Activated T-helper 1 cell treated with anti-CD3 and anti-CD28 coated beads, Interleukin-12 subunit alpha, Interleukin-12 subunit beta, Interleukin-2, Interleukin-4 antibody, amounts not matched to agents 30 ng/mL and 10 ng/mL and 1 ng/mL, durations not matched to agents 14 hours and 24 hours and 36 hours (primary cell): ENCODE measurements at regions of chr4 and their contacts with region 1.

Region 1: DNA sequence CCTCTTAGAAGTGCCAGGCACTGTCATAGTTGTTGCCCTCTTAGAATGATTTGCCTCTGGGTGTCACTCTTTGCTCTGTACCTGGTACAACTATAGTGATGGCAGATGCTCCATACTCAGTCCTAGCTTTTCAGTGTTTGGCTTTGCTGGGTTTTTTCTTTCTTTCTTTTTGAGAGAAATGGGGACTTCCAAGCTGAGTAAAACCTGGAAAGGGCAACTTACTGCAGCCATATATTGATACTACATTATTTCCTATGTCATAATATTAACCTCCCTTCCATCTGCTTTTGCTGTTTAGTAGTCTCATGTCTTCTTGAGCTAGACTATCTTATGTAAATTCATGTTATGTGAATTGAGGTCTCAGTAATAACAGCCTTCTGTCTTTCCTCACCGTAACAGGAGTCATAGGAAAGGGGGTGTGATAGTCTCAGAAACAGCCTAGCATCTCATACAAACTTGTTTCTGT is 49.0 kb downstream of the NIPAL1 start:
- DNase-seq: no peak
- H3K4me3 Mint-ChIP-seq: no peak overlapping the region
- H3K27ac Mint-ChIP-seq: no peak overlapping the region
- H3K4me1 Mint-ChIP-seq: no peaks in the 10 kb centered on the region
- H3K27me3 Mint-ChIP-seq: peaks cover 2% of the 10 kb centered on the region

Region 2: DNA sequence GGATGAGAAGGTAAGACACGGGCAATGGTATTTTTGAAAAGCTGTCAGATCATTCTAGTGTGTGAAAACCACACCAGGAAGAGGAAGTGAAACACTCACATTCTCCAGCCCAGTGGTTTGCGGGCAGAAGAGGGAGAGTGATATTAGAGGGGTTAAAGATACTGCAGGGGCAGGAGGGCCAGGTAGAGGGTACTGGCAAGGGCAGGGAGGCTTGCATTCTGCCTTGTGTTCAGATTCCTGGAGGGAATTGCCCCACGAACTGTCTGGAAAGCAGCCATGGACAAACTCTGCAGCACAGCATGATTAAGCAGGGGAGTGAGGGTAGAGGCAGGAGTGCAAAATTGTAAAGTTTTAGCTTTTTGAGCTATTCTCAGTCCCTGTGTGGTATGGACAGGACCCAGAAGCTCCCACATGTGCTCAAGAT is 18.2 kb before region 1 on chr4:
- intact Hi-C with region 1: loop called (anchors 1 kb)
- DNase-seq: peak; percentile 55
- H3K4me3 Mint-ChIP-seq: peak overlapping the region; percentile 44
- H3K27ac Mint-ChIP-seq: peak overlapping the region; percentile 10
- H3K4me1 Mint-ChIP-seq: peaks cover 35% of the 10 kb centered on the region
- H3K27me3 Mint-ChIP-seq: peaks cover 63% of the 10 kb centered on the region

Region 3: DNA sequence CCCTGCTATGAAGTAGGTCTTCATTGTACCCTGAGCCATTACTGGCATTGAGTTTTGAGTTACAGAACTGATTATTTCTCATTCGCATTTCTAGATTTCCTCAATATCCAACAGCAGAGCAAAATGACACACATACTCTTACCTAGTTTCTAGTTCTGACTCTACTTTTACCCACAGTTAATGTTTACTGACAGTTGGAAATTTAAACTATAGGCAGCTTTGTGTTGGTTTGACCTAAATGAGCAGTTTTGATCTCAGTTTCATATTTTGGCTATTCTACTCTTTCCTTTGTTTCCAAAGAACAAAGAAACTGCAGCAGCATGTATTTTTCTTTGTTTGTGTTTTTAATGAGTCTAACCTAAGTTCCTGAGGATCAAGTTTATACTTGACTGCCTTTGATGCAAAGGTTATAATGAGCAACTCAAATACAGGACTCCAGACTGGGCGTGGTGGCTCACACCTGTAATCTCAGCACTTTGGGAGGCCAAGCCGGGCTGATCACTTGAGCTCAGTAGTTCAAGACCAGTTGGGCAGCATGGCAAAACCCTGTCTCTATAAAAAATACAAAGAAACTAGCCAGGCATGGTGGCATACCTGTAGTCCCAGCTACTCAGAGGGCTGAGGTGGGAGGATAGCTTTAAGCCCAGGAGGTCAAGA is 38.0 kb after region 1 on chr4:
- intact Hi-C with region 1: loop called (anchors 1 kb)
- DNase-seq: no peak
- H3K4me3 Mint-ChIP-seq: no peak overlapping the region
- H3K27ac Mint-ChIP-seq: peak overlapping the region; percentile 63
- H3K4me1 Mint-ChIP-seq: peaks cover 24% of the 10 kb centered on the region
- H3K27me3 Mint-ChIP-seq: no peaks in the 10 kb centered on the region

Region 4: DNA sequence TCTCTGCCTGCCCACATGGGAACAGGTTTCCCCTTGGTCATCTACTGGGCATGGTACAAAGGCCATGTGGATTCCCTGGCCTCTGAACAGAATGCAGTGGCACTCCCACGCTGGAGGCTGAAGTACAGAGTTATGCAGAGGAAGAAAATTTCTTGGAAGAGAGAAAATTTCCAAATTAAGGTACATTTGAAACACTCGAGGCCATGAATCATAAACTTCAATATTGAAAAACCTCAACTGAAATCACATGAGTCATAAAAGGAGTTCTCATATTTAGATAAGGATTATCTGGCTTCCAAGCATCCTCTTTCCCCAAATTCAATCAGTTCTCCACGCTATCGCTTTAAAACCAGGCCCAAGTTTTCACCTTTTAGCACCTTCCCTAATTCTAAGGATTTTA is 96.5 kb after region 1 on chr4:
- intact Hi-C with region 1: loop called (anchors 1 kb)
- DNase-seq: no peak
- H3K4me3 Mint-ChIP-seq: no peak overlapping the region
- H3K27ac Mint-ChIP-seq: peak overlapping the region; percentile 6
- H3K4me1 Mint-ChIP-seq: peaks cover 10% of the 10 kb centered on the region
- H3K27me3 Mint-ChIP-seq: no peaks in the 10 kb centered on the region

Region 5: GRCh38 chr4:48813964-48814363 is 748.3 kb after region 1 on chr4:
- intact Hi-C with region 1: no loop called
- DNase-seq: no peak
- H3K4me3 Mint-ChIP-seq: no peak overlapping the region
- H3K27ac Mint-ChIP-seq: no peak overlapping the region
- H3K4me1 Mint-ChIP-seq: peaks cover 8% of the 10 kb centered on the region
- H3K27me3 Mint-ChIP-seq: peaks cover 8% of the 10 kb centered on the region